Naive thymus-derived CD4-positive, alpha-beta T cell (primary cell): ENCODE measurements at regions of chr7 and their contacts with region 1.

Region 1: GRCh38 chr7:89377219-89377618 is 581.7 kb upstream of the TEX47 start:
- DNase-seq: no peak
- ATAC-seq: no peak
- H3K4me3 ChIP-seq: no peak overlapping the region
- H3K4me3 Mint-ChIP-seq: no peak overlapping the region
- H3K27ac ChIP-seq: no peak overlapping the region
- H3K27ac Mint-ChIP-seq: no peak overlapping the region
- H3K4me1 ChIP-seq: no peaks in the 10 kb centered on the region
- H3K4me1 Mint-ChIP-seq: no peaks in the 10 kb centered on the region
- H3K27me3 ChIP-seq: no peaks in the 10 kb centered on the region
- H3K27me3 Mint-ChIP-seq: no peaks in the 10 kb centered on the region

Region 2: GRCh38 chr7:88866300-88866863 is 510.8 kb before region 1 on chr7:
- CTCF ChIA-PET with region 1: no interaction called
- POLR2A ChIA-PET with region 1: no interaction called
- intact Hi-C with region 1: loop called in 1 of 2 experiments (anchors 5 kb)
- DNase-seq: no peak
- ATAC-seq: no peak
- H3K4me3 ChIP-seq: no peak overlapping the region
- H3K4me3 Mint-ChIP-seq: no peak overlapping the region
- H3K27ac ChIP-seq: no peak overlapping the region
- H3K27ac Mint-ChIP-seq: no peak overlapping the region
- H3K4me1 ChIP-seq: no peaks in the 10 kb centered on the region
- H3K4me1 Mint-ChIP-seq: no peaks in the 10 kb centered on the region
- H3K27me3 ChIP-seq: no peaks in the 10 kb centered on the region
- H3K27me3 Mint-ChIP-seq: peaks cover 0 to 8% (median 0%) of the 10 kb centered on the region in 5 donors